ENCODE measurements at regions of chr12 and their contacts with region 1.

Region 1: DNA sequence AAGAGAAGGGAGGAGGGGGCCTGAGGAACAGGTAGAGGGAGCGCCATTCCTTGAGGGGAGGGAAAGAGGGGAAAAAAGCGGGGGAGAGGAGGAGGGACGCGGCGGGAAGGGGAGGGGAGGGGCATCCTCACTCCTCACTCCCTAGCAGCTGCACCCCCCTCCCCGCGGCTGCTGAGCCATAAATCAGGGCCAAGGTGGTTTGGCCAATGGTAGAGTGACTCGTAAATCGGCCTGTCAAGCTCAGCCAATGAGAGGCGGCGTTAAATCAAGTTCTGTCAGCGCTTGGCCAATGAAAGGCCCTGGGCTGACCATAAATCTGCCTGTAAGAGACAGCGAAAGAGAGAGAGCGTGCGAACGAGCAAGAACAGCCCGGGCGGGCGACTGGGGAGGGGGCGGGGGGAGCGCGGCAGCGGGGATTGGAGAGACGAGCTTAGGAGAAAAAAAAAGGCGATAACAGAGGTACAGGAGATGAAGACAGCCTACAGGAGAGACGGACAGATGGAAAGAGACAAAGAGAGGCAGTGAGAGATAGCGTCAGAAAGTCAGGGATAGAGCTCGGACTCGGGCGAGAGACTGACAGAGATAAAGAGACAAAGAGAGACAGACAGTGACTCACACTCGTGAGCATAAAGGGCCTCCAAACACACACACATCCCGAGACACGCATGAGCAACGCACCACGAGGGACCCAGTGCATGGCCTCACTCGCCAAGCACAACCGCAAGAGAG is 5.1 kb downstream of the GPR84 start:
- DNase-seq: peak; percentile 71
- ATAC-seq: peak; percentile 97
- H3K4me3 Mint-ChIP-seq: no peak overlapping the region
- H3K27ac Mint-ChIP-seq: no peak overlapping the region
- H3K4me1 Mint-ChIP-seq: peaks cover 11% of the 10 kb centered on the region
- H3K27me3 Mint-ChIP-seq: no peaks in the 10 kb centered on the region
- CTCF ChIP-seq: no peak

Region 2: DNA sequence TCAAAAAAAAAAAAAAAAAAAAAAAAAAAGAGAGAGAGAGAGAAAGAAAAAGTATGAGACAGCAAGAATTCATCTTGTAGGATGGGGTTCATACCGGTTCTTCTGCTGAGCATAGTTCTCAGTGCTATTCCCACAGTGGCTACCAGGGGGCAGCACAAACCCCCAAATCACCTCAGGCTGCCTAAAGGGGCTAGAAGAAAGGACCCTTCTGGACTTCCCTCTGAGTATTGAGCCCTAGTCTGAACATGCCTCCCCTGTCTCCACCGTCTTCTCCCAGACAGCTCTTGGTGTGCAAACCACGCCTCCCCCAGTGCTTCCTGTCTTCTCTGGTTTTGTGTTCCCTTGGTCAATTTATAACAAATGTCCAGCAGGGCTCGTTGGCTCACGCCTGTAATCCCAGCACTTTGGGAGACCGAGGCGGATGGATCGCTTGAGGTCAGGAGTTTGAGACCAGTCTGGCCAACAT is 139.1 kb before region 1 on chr12:
- CTCF ChIA-PET with region 1: interaction called, 4 read pairs
- POLR2A ChIA-PET with region 1: interaction called, 5 read pairs
- intact Hi-C with region 1: loop called (anchors 1 kb)
- DNase-seq: peak; percentile 58
- ATAC-seq: peak; percentile 49
- H3K4me3 Mint-ChIP-seq: no peak overlapping the region
- H3K27ac Mint-ChIP-seq: no peak overlapping the region
- H3K4me1 Mint-ChIP-seq: peaks cover 35% of the 10 kb centered on the region
- H3K27me3 Mint-ChIP-seq: no peaks in the 10 kb centered on the region
- CTCF ChIP-seq: no peak

Region 3: DNA sequence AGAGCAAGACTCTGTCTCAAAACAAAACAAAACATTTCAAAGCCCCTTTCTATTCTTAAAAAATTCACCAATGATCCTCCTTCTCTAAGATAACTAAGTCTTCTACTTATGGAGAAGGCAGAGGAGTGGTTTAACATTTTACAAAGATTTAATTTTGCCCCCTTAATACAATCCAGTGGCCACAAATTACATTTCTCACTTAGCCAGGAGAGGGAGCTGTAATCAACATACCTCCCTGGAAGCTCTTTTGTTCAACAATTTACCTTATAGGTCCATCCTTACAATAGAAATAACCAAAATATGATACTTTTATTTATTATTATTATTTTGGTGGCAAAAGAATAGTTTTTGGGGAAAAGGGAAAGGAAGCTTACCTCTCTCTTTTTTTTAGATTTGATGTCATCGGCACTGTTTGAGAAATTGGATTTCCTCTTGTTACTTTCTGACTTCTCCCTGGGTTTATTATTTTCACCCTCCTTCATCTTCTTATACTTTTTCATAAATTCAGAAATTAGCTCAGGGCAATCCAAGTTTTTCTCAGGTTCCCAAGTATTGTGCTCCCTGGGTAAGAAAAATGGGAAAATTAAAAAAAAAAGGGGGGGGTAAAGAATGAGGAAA is 107.4 kb before region 1 on chr12:
- CTCF ChIA-PET with region 1: interaction called, 11 read pairs
- POLR2A ChIA-PET with region 1: interaction called, 7 read pairs
- intact Hi-C with region 1: loop called (anchors 1 kb)
- DNase-seq: no peak
- ATAC-seq: peak; percentile 74
- H3K4me3 Mint-ChIP-seq: no peak overlapping the region
- H3K27ac Mint-ChIP-seq: no peak overlapping the region
- H3K4me1 Mint-ChIP-seq: peaks cover 7% of the 10 kb centered on the region
- H3K27me3 Mint-ChIP-seq: no peaks in the 10 kb centered on the region
- CTCF ChIP-seq: peak; percentile 30

Region 4: DNA sequence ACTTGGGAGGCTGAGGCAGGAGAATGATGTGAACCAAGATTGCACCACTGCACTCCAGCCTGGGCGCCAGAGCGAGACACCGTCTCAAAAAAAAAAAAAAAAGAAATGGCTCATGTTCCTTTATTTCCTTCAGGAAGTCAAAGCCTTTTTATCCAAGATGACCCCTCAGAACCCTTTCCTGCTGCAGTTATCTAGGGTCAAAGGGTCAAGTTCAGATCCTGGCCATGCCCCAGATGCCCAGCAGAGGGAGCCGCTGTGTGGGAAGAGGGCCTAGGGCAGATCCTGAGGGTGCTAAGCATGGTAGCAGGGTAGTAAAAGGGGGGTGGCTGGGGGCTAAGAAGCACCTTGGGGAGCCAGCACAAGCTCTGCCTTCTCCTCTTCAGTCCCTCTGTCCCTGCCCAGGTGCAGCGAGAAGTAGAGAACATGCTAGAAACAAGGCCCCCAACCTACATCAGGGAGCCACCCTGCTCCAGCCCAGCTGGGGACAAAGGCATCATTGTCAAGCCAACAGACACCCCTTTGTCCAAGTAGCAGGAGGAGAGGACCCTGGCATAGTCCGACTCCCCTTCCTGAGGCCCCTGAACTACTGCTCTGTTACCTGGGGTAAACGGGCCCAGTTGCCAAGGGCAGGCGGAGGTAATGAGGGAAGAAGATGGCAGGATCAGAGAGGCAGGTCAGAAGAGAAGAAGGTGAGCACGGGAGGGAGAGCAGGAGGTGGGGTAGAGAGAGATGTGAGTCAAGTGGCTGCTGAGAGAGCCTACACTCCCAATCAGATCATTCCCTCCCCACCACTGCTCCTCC is 64.8 kb before region 1 on chr12:
- CTCF ChIA-PET with region 1: interaction called, 10 read pairs
- POLR2A ChIA-PET with region 1: interaction called, 3 read pairs
- intact Hi-C with region 1: no loop called
- DNase-seq: no peak
- ATAC-seq: peak; percentile 79
- H3K4me3 Mint-ChIP-seq: no peak overlapping the region
- H3K27ac Mint-ChIP-seq: no peak overlapping the region
- H3K4me1 Mint-ChIP-seq: peaks cover 12% of the 10 kb centered on the region
- H3K27me3 Mint-ChIP-seq: peaks cover 12% of the 10 kb centered on the region
- CTCF ChIP-seq: no peak

Region 5: DNA sequence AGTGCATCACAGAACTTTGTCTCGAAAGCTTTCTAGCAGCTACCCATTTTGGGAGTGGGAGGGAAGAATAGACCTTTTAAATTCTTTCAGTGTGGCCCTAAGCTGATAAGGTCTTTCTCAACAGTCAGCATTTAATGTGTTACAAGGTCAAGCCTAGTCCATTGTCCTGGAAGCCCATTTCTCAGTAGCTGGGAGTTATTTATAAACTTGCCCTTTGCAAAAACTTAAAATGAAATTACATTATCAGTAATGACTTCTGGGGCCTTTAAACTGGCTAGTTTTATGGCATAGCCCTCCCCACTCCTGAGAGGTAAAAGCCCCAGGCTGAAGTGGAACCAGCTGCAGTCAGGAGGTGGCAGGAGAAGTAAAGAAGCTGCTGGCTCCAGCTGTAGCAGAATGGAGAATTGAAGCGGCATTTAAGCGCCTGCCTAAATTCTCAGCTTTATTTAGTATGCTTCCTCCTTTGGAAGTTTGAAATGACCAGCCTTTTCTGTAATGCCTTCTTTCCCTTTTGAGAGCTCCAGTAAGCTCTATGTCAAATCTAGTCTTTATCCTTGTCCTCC is 21.8 kb before region 1 on chr12:
- CTCF ChIA-PET with region 1: interaction called, 13 read pairs
- POLR2A ChIA-PET with region 1: interaction called, 8 read pairs
- intact Hi-C with region 1: no loop called
- DNase-seq: no peak
- ATAC-seq: no peak
- H3K4me3 Mint-ChIP-seq: no peak overlapping the region
- H3K27ac Mint-ChIP-seq: no peak overlapping the region
- H3K4me1 Mint-ChIP-seq: peaks cover 9% of the 10 kb centered on the region
- H3K27me3 Mint-ChIP-seq: no peaks in the 10 kb centered on the region
- CTCF ChIP-seq: no peak

Measured in activated B cell treated with CpG ODN at 0.5 μM for 24 hours (primary cell).